ENCODE measurements at regions of chr14 and their contacts with region 1.

Region 1: DNA sequence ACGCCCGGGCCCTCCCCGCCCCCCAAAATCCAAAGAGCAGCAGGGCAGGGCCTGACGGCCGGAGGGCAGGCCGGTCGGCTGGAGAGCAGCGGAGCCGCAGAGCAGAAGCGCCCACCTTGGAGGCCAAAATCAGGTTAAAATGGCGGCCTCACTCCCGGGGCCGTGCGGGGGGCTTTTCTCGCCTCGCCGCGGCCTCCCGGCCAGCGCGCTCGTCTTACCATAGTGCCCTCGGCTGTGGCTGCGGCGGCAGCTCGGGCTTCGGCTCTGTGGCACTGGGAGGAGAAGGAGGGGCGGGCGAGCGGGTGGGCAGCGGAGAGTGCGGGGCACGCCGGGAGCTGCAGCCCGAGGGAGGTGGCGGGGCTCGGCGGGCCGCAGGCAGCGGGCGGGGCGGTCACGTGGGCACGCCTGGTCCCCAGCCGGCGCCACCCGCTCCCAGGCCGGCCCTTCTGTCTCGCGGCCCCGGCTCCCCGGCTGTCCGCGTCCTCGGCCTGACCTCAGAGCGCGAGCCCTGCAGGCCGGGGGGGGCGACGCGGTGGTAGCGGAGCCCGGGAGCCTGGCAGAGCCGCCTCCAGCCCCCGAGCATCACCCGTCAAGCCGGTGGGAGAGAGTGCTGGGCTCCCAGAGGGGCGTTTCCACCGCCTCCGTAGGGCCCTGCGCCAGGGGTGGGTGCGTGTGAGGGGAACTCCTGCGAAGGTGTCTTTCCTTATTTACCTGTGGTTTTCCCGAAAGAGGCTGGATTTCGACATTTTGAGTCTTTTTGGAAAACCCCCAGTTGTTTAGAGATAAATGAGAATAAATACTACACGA is at the start of gene CFL2:
- DNase-seq: peak; percentile 85 to 91 (median 87)
- H3K4me3 ChIP-seq: peak within 1 kb of the TSS; percentile 72 to 85 (median 78)
- H3K27ac ChIP-seq: peak within 1 kb of the TSS; percentile 45 to 98 (median 95)
- H3K4me1 ChIP-seq: peaks cover 33 to 41% of the 10 kb centered on the region in 2 donors
- H3K27me3 ChIP-seq: no peaks in the 10 kb centered on the region
- CTCF ChIP-seq: peak in 1 of 6 experiments; percentile 9
- POLR2A ChIP-seq: peak; percentile 83 to 87
- total RNA-seq, gene CFL2: 75.5 to 219 (median 133) TPM

Region 2: DNA sequence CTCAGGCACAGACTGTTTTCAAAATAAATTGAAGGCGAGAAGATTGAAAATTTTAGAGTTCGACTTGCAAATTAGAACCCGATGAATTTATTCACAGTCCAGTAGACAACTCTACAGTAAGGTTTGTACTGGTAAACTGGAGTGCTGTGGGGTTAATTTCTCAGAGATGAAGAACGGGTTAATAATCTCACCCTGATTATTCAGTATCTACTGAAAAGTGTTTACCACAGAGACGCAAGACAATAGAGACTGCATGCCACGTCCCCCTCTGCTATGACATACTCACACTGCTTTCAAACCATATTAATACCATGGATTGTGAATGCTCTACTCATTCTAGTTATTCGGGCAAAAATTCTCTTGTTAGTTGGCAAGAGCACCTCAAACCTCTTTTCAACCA is 36.2 kb before region 1 on chr14:
- intact Hi-C with region 1: loop called in 1 of 2 experiments (anchors 5 kb)
- DNase-seq: no peak
- H3K4me3 ChIP-seq: no peak overlapping the region
- H3K27ac ChIP-seq: no peak overlapping the region
- H3K4me1 ChIP-seq: peaks cover 0 to 7% of the 10 kb centered on the region in 2 donors
- H3K27me3 ChIP-seq: no peaks in the 10 kb centered on the region
- CTCF ChIP-seq: no peak
- POLR2A ChIP-seq: no peak

Region 3: GRCh38 chr14:34997762-34998161 is 283.2 kb after region 1 on chr14:
- intact Hi-C with region 1: no loop called
- DNase-seq: no peak
- H3K4me3 ChIP-seq: no peak overlapping the region
- H3K27ac ChIP-seq: no peak overlapping the region
- H3K4me1 ChIP-seq: no peaks in the 10 kb centered on the region
- H3K27me3 ChIP-seq: no peaks in the 10 kb centered on the region
- CTCF ChIP-seq: no peak
- POLR2A ChIP-seq: no peak

Measured in adrenal gland (tissue), 19 donors.